ENCODE measurements at regions of chr1 and their contacts with region 1.

Region 1: GRCh38 chr1:156383023-156383422 is 14.0 kb downstream of the RHBG start:
- DNase-seq: peak; percentile 9 to 57 (median 46)
- ATAC-seq: peak; percentile 90
- H3K4me3 ChIP-seq: no peak overlapping the region
- H3K4me3 Mint-ChIP-seq: no peak overlapping the region
- H3K27ac ChIP-seq: no peak overlapping the region
- H3K27ac Mint-ChIP-seq: no peak overlapping the region
- H3K4me1 ChIP-seq: peaks cover 6 to 8% of the 10 kb centered on the region in 2 donors
- H3K4me1 Mint-ChIP-seq: peaks cover 5 to 7% (median 6%) of the 10 kb centered on the region in 7 donors
- H3K27me3 ChIP-seq: peaks cover 0 to 3% of the 10 kb centered on the region in 2 donors
- H3K27me3 Mint-ChIP-seq: peaks cover 0 to 23% (median 12%) of the 10 kb centered on the region in 5 donors

Region 2: DNA sequence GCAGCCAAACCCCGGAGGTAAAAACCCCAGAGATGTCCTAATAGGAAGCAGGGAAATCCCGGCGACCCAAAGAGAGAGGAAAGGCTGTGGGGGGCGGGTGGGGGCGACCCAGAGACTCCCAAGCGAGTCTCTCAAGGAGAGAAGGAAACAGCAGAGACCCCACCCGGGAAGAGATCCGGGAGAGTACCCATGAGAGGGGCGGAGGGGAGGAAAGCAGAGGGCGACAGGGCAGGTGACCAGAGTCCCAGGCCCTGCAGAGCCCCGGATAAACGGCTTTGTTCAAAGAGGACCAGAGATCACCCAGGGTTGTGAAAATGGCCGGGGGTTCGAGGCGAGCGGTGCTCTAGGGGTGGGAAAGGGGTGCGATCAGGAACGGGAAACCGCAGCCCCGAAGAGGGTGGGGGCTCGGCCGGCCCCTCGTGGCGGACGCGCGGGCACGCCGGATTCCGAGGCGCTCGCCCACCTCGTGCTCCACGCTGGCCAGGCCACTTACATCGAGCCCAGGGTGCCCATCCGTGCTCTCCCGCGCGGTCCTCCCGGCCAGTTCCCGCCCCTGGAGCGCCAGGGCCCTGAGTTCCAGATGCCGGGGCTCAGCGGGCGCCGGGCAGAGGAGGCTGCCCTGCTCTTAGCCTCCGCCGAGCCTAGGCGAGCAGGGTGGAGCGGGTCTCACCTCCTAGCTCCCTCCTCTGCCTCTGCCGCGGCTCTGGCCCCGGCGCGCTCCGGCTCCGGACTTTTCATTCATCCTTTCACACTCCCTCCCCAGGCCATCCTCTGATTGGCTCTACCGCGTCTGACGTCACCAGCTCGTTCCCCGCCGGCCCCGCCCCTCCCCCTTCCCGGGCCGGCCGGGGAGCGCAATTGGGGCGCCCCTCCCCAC is 38.3 kb after region 1 on chr1:
- CTCF ChIA-PET with region 1: interaction called, 11 read pairs
- POLR2A ChIA-PET with region 1: interaction called, 3 read pairs
- intact Hi-C with region 1: loop called in 1 of 2 experiments (anchors 2 kb)
- DNase-seq: peak in 8 of 9 donors; percentile 25 to 74 (median 38)
- ATAC-seq: peak; percentile 76
- H3K4me3 ChIP-seq: peak overlapping the region; percentile 77
- H3K4me3 Mint-ChIP-seq: peak overlapping the region; percentile 82 to 94 (median 87)
- H3K27ac ChIP-seq: no peak overlapping the region
- H3K27ac Mint-ChIP-seq: peak overlapping the region in 3 of 9 donors; percentile 38 to 66 (median 56)
- H3K4me1 ChIP-seq: peaks cover 15 to 24% of the 10 kb centered on the region in 2 donors
- H3K4me1 Mint-ChIP-seq: peaks cover 9 to 28% (median 16%) of the 10 kb centered on the region in 7 donors
- H3K27me3 ChIP-seq: peaks cover 0 to 37% of the 10 kb centered on the region in 2 donors
- H3K27me3 Mint-ChIP-seq: peaks cover 74 to 96% (median 81%) of the 10 kb centered on the region in 5 donors

Region 3: DNA sequence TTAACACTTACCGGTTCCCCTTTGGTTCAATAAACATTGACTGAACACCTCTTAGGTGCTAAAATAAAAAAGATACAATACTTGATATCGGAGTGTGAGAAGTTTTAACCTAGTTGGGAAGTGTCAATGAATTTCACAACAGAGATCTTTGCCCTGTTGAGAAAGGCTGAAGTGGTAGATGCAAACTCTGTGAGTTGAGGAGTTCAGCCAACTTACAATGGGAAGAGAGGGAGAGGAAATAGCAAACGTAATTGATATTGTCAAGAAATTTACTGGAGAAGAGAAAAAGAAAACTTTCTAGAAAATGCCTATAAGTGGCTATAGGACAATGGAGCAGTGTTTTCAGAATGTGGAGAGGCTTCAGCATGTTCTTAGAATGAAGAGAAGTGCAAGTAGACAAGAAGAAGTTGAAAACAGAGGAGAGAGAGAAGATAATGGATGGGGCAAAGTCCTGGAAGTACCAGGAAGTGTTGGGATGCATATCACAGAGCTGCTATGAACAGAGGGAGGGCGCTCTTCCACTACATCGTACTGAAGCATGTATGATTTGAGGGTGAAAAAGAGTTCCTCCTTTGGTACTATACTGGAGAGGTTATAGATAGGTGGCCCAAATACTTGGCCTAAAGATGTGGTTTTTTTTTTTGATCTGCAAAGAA is 68.6 kb after region 1 on chr1:
- CTCF ChIA-PET with region 1: interaction called, 129 read pairs
- POLR2A ChIA-PET with region 1: interaction called, 17 read pairs
- intact Hi-C with region 1: loop called (anchors 1 kb)
- DNase-seq: no peak
- ATAC-seq: no peak
- H3K4me3 ChIP-seq: no peak overlapping the region
- H3K4me3 Mint-ChIP-seq: no peak overlapping the region
- H3K27ac ChIP-seq: no peak overlapping the region
- H3K27ac Mint-ChIP-seq: no peak overlapping the region
- H3K4me1 ChIP-seq: no peaks in the 10 kb centered on the region
- H3K4me1 Mint-ChIP-seq: peaks cover 0 to 6% (median 5%) of the 10 kb centered on the region in 7 donors
- H3K27me3 ChIP-seq: no peaks in the 10 kb centered on the region
- H3K27me3 Mint-ChIP-seq: peaks cover 0 to 37% (median under 1%) of the 10 kb centered on the region in 5 donors

Region 4: DNA sequence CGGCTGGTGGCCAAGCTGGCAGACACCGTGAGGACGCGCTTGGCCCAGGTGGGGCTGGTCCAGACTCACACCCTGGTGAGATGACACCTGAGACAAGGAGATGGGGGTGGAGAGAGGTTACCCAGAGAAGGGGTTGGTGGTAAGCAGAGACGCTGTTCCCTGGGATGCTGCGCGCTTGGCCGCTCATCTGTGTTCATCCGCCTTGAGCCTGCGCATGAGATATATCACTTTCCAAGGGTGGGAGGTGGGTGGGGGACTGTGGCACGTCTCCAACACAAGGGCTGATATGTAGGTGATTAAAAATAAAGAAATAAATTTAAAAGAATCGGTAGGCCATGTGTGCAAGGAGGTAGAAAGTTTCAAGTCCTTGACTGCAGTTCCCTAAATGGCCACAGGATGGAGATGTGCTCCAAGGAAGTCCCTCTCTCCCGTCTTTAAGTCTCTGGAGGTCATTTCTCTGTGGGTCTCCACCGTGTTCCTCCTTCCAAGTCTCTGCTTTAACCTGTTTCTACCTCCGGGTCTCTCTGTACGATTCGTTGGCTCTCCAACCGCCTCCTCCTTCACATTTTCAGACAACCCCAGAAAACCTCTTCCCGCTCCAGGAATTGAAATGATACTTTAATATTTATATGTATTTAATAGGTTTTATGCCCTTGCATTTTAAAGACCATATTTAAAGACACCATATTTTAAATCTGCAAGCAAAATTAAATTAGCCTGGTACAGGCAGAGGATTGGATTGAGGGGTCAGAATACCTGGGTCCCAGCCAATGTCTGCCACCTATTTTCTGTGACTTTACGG is 201.0 kb after region 1 on chr1:
- CTCF ChIA-PET with region 1: interaction called, 3 read pairs
- POLR2A ChIA-PET with region 1: no interaction called
- intact Hi-C with region 1: loop called in 1 of 2 experiments (anchors 1 kb)
- DNase-seq: peak in 8 of 9 donors; percentile 49 to 76 (median 69)
- ATAC-seq: peak; percentile 81
- H3K4me3 ChIP-seq: no peak overlapping the region
- H3K4me3 Mint-ChIP-seq: peak overlapping the region in 8 of 10 donors; percentile 9 to 77 (median 54)
- H3K27ac ChIP-seq: peak overlapping the region; percentile 3
- H3K27ac Mint-ChIP-seq: peak overlapping the region in 8 of 9 donors; percentile 26 to 88 (median 72)
- H3K4me1 ChIP-seq: peaks cover 15 to 25% of the 10 kb centered on the region in 2 donors
- H3K4me1 Mint-ChIP-seq: peaks cover 6 to 40% (median 29%) of the 10 kb centered on the region in 7 donors
- H3K27me3 ChIP-seq: no peaks in the 10 kb centered on the region
- H3K27me3 Mint-ChIP-seq: no peaks in the 10 kb centered on the region

Region 5: DNA sequence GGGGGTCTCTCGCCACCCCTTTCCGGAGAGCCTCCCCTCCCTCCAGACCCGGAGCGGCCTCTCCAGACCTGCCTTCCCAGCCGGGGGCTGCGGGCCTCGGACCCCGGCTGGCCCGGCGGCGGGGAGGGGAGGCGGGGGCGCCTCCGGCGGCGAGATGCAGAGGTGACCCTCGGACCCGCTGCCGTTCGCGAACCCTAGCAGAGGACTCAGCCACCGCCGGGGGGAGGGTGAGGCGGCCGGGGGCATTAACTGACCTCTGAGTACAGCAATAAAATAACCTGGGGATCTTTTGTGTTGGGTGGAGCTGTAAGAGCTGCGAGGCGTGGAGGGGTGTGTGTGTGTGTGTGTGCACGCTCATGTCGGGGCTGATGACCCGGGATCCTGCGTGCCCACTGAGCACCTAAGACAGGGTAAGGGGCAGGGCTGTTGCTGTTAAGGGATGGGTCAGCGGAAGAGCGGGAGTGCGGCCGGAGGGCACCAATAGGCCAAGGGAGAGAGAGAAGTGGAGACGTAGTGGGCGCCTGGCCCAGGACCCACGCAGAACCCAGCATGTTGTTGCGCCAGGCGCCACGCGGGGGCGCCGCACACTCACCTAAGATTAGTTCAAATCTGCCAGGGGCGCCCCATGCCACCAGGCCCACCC is 242.5 kb after region 1 on chr1:
- CTCF ChIA-PET with region 1: interaction called, 3 read pairs
- POLR2A ChIA-PET with region 1: no interaction called
- intact Hi-C with region 1: loop called in 1 of 2 experiments (anchors 1 kb)
- DNase-seq: peak; percentile 51 to 78 (median 65)
- ATAC-seq: peak; percentile 83
- H3K4me3 ChIP-seq: peak overlapping the region; percentile 47
- H3K4me3 Mint-ChIP-seq: peak overlapping the region; percentile 74 to 92 (median 81)
- H3K27ac ChIP-seq: no peak overlapping the region
- H3K27ac Mint-ChIP-seq: peak overlapping the region in 4 of 9 donors; percentile 8 to 44 (median 21)
- H3K4me1 ChIP-seq: peaks cover 9 to 15% of the 10 kb centered on the region in 2 donors
- H3K4me1 Mint-ChIP-seq: peaks cover 7 to 13% (median 11%) of the 10 kb centered on the region in 7 donors
- H3K27me3 ChIP-seq: peaks cover 8 to 31% of the 10 kb centered on the region in 2 donors
- H3K27me3 Mint-ChIP-seq: peaks cover 46 to 71% (median 59%) of the 10 kb centered on the region in 5 donors

Region 6: GRCh38 chr1:156648951-156649350 is 265.9 kb after region 1 on chr1:
- CTCF ChIA-PET with region 1: no interaction called
- POLR2A ChIA-PET with region 1: no interaction called
- intact Hi-C with region 1: no loop called
- DNase-seq: no peak
- ATAC-seq: no peak
- H3K4me3 ChIP-seq: no peak overlapping the region
- H3K4me3 Mint-ChIP-seq: no peak overlapping the region
- H3K27ac ChIP-seq: no peak overlapping the region
- H3K27ac Mint-ChIP-seq: no peak overlapping the region
- H3K4me1 ChIP-seq: peaks cover 0 to 2% of the 10 kb centered on the region in 2 donors
- H3K4me1 Mint-ChIP-seq: peaks cover 0 to 18% (median under 1%) of the 10 kb centered on the region in 7 donors
- H3K27me3 ChIP-seq: peaks cover 0 to 7% of the 10 kb centered on the region in 2 donors
- H3K27me3 Mint-ChIP-seq: peaks cover 75 to 87% (median 79%) of the 10 kb centered on the region in 5 donors